ENCODE measurements at regions of chr11 and their contacts with region 1.

Region 1: GRCh38 chr11:117098269-117099232 is at the start of gene SIK3:
- DNase-seq: peak; percentile 89
- ATAC-seq: peak; percentile 83
- H3K4me3 ChIP-seq: peak within 1 kb of the TSS; percentile 98
- H3K27ac ChIP-seq: peak within 1 kb of the TSS; percentile 96
- H3K4me1 ChIP-seq: peaks cover 16% of the 10 kb centered on the region
- H3K27me3 ChIP-seq: no peaks in the 10 kb centered on the region
- CTCF ChIP-seq: peak; percentile 81
- POLR2A ChIP-seq: peak; percentile 43; the same call in 1 of the 2 replicates
- RAD21 ChIP-seq: peak; percentile 83
- total RNA-seq, gene SIK3: 8.2 and 17.2 TPM in 2 replicates

Region 2: GRCh38 chr11:116787786-116788486 is 310.6 kb before region 1 on chr11 and contains the start of gene ZPR1:
- CTCF ChIA-PET with region 1: interaction called, 8 read pairs
- POLR2A ChIA-PET with region 1: no interaction called
- dilution Hi-C with region 1: no loop called
- in situ Hi-C with region 1: loop called (anchors 5 kb)
- intact Hi-C with region 1: loop called (anchors 2 kb)
- DNase-seq: peak; percentile 56
- ATAC-seq: peak; percentile 88
- H3K4me3 ChIP-seq: peak within 1 kb of the TSS; percentile 67
- H3K27ac ChIP-seq: peak within 1 kb of the TSS; percentile 81
- H3K4me1 ChIP-seq: peaks cover 8% of the 10 kb centered on the region
- H3K27me3 ChIP-seq: no peaks in the 10 kb centered on the region
- CTCF ChIP-seq: no peak
- POLR2A ChIP-seq: peak; percentile 85
- RAD21 ChIP-seq: no peak
- total RNA-seq, gene ZPR1: 52.0 and 53.9 TPM in 2 replicates

Region 3: DNA sequence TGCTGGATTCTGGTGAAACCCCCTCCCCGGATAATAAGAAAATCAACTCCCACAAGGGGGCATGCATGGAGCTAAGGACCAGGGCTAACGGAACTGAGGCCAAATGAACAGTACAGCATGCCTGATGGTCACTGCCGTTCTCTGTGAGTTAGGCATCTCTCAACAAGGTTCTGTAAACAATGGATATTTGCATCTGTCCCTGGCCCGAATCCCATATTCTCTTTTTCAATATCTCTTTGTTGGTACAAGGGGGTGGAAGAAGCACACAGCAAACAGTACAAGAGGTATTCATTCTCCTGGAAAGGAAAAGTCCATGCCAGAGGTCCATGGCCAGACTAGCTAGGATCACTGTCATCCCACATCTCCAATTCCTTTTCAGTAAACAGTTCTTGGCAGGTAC is 228.9 kb before region 1 on chr11:
- CTCF ChIA-PET with region 1: no interaction called
- POLR2A ChIA-PET with region 1: no interaction called
- dilution Hi-C with region 1: no loop called
- in situ Hi-C with region 1: no loop called
- intact Hi-C with region 1: no loop called
- DNase-seq: no peak
- ATAC-seq: no peak
- H3K4me3 ChIP-seq: no peak overlapping the region
- H3K27ac ChIP-seq: no peak overlapping the region
- H3K4me1 ChIP-seq: peaks cover 3% of the 10 kb centered on the region; the same call in 1 of the 2 replicates
- H3K27me3 ChIP-seq: no peaks in the 10 kb centered on the region
- CTCF ChIP-seq: no peak
- POLR2A ChIP-seq: no peak
- RAD21 ChIP-seq: no peak

Region 4: GRCh38 chr11:116879800-116880625 is 218.5 kb before region 1 on chr11:
- CTCF ChIA-PET with region 1: interaction called, 22 read pairs
- POLR2A ChIA-PET with region 1: no interaction called
- dilution Hi-C with region 1: no loop called
- in situ Hi-C with region 1: loop called (anchors 5 kb)
- intact Hi-C with region 1: loop called (anchors 1 kb)
- DNase-seq: peak; percentile 85
- ATAC-seq: peak; percentile 93
- H3K4me3 ChIP-seq: no peak overlapping the region
- H3K27ac ChIP-seq: no peak overlapping the region
- H3K4me1 ChIP-seq: peaks cover 7% of the 10 kb centered on the region
- H3K27me3 ChIP-seq: no peaks in the 10 kb centered on the region
- CTCF ChIP-seq: peak; percentile 79
- POLR2A ChIP-seq: no peak
- RAD21 ChIP-seq: peak; percentile 89

Region 5: DNA sequence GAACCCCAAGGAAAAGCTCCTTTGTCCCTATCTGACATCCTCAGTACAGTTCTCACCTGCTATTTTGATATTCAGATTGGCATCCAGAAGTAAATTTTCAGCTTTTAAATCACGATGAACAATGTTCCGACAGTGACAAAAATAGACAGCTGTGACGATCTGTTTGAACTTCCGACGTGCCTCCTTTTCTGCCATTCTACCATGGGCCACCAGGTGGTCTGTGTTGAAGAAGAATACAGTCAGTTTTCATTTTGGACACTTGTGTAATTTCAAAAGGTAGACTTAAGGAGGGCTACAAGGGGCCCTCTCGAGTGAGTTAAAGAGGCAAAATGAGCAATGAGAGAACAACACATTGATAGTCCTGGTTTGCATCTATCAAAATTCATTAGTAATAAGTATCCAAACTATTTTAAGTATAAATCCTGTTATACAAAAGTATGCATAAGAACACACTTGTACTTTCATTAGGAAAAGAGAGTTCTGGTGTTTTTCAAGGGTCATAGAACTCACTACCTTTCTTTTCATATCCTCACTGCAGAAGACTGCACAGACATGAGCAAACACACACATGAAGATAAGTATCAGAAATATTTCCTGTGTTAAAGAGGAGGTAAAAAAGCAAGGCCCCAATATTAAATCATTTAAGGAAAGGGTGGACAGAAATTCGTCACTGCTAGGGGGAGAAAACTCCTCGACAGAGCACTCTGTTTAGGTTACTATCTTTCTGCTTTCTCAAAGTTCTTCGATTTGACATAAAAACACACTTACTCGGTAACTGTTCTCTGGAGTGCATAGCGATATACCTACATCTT is 171.2 kb before region 1 on chr11:
- CTCF ChIA-PET with region 1: interaction called, 5 read pairs
- POLR2A ChIA-PET with region 1: no interaction called
- dilution Hi-C with region 1: no loop called
- in situ Hi-C with region 1: no loop called
- intact Hi-C with region 1: loop called (anchors 5 kb)
- DNase-seq: no peak
- ATAC-seq: no peak
- H3K4me3 ChIP-seq: no peak overlapping the region
- H3K27ac ChIP-seq: no peak overlapping the region
- H3K4me1 ChIP-seq: peaks cover 13% of the 10 kb centered on the region
- H3K27me3 ChIP-seq: no peaks in the 10 kb centered on the region
- CTCF ChIP-seq: 0 out of 2 replicates have a peak, but pooled peaks have one; percentile 15
- POLR2A ChIP-seq: no peak
- RAD21 ChIP-seq: peak; percentile 16; the same call in 1 of the 2 replicates

Region 6: DNA sequence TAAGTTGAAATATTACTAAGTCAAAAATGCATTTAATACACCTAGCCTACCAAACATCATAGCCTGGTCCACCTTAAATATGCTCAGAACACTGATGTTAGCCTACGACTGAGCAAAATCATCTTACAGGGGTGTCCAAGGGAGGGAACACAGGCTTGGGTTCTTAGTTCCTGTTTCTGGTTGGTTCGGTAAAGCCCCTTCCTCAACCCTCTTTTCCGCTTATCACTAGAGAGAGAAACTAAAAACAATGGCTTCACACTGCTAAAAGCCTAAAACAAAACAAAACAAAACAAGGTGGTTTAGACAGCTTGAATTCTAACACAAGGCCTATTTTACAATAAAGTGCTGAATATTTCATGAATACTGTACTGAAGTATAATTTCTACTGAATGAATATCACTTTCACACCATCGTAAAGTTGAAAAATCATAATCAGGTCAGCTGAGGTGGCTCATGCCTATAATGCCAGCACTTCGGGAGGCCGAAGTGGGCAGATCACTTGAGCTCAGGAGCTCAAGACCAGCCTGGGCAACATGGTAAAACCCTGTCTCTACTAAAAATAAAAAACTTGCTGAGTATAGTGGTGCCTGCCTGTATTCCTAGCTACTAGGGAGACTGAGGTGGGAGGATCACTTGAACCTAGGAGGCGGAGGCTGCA is 118.3 kb before region 1 on chr11:
- CTCF ChIA-PET with region 1: no interaction called
- POLR2A ChIA-PET with region 1: no interaction called
- dilution Hi-C with region 1: no loop called
- in situ Hi-C with region 1: no loop called
- intact Hi-C with region 1: loop called (anchors 2 kb)
- DNase-seq: no peak
- ATAC-seq: no peak
- H3K4me3 ChIP-seq: no peak overlapping the region
- H3K27ac ChIP-seq: no peak overlapping the region
- H3K4me1 ChIP-seq: peaks cover 8% of the 10 kb centered on the region
- H3K27me3 ChIP-seq: no peaks in the 10 kb centered on the region
- CTCF ChIP-seq: no peak
- POLR2A ChIP-seq: no peak
- RAD21 ChIP-seq: no peak

Region 7: DNA sequence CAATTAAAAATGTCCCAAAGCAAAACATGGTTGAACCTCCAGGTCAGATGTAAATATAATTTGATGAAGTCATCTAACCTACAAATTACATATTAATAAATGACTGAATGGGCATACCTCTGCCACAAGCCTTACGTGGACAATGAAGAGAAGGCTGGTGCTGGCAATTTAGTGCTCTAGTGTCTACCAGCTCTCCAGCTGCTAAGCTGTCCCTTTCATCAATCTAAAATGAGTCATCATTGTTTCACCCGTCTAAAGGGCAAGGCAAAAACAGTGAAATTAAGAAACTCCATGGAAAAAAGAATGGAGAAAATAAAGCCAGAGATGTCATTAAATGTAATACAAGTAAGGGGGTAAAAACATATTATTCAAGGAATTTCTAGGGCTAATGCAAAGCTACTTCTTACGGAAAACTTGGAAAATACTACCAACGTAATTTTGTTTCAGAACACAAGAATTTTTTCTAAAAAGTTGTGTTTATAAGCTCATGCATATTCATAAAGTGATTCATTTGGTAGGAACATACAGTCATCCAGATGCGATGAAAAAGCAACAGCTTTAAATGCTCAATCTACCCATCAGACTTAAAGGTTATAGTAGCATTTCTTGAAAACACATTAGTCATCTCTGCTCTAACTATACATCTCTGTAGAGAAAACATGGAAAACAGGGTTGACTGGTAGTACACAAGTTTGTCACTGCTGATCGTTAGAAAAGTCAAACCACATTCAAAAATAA is 71.8 kb before region 1 on chr11:
- CTCF ChIA-PET with region 1: interaction called, 3 read pairs
- POLR2A ChIA-PET with region 1: no interaction called
- dilution Hi-C with region 1: no loop called
- in situ Hi-C with region 1: no loop called
- intact Hi-C with region 1: loop called (anchors 5 kb)
- DNase-seq: peak; percentile 90
- ATAC-seq: peak; percentile 82
- H3K4me3 ChIP-seq: no peak overlapping the region
- H3K27ac ChIP-seq: no peak overlapping the region
- H3K4me1 ChIP-seq: 0 out of 2 replicates have a peak, but pooled peaks cover 4% of the 10 kb centered on the region
- H3K27me3 ChIP-seq: no peaks in the 10 kb centered on the region
- CTCF ChIP-seq: no peak
- POLR2A ChIP-seq: no peak
- RAD21 ChIP-seq: no peak

Region 8: GRCh38 chr11:117039270-117039669 is 59.3 kb before region 1 on chr11:
- CTCF ChIA-PET with region 1: interaction called, 10 read pairs
- POLR2A ChIA-PET with region 1: no interaction called
- dilution Hi-C with region 1: no loop called
- in situ Hi-C with region 1: no loop called
- intact Hi-C with region 1: no loop called
- DNase-seq: no peak
- ATAC-seq: no peak
- H3K4me3 ChIP-seq: no peak overlapping the region
- H3K27ac ChIP-seq: no peak overlapping the region
- H3K4me1 ChIP-seq: peaks cover 5% of the 10 kb centered on the region; the same call in 1 of the 2 replicates
- H3K27me3 ChIP-seq: no peaks in the 10 kb centered on the region
- CTCF ChIP-seq: no peak
- POLR2A ChIP-seq: no peak
- RAD21 ChIP-seq: no peak

Region 9: GRCh38 chr11:117134431-117134830 is 35.9 kb after region 1 on chr11:
- CTCF ChIA-PET with region 1: no interaction called
- POLR2A ChIA-PET with region 1: no interaction called
- dilution Hi-C with region 1: no loop called
- in situ Hi-C with region 1: no loop called
- intact Hi-C with region 1: no loop called
- DNase-seq: no peak
- ATAC-seq: no peak
- H3K4me3 ChIP-seq: no peak overlapping the region
- H3K27ac ChIP-seq: no peak overlapping the region
- H3K4me1 ChIP-seq: no peaks in the 10 kb centered on the region
- H3K27me3 ChIP-seq: no peaks in the 10 kb centered on the region
- CTCF ChIP-seq: no peak
- POLR2A ChIP-seq: no peak
- RAD21 ChIP-seq: no peak